CD8-positive, alpha-beta T cell (primary cell): ENCODE measurements at regions of chr11 and their contacts with region 1.

Region 1: GRCh38 chr11:73597956-73598718 is at the start of gene FAM168A:
- DNase-seq: peak; percentile 85 to 98 (median 93)
- ATAC-seq: peak; percentile 87
- H3K4me3 ChIP-seq: peak within 1 kb of the TSS; percentile 81 to 99
- H3K4me3 Mint-ChIP-seq: peak within 1 kb of the TSS; percentile 90
- H3K27ac ChIP-seq: peak within 1 kb of the TSS; percentile 76 to 83
- H3K27ac Mint-ChIP-seq: peak within 1 kb of the TSS; percentile 90
- H3K4me1 ChIP-seq: peaks cover 20% of the 10 kb centered on the region
- H3K4me1 Mint-ChIP-seq: peaks cover 46% of the 10 kb centered on the region
- H3K27me3 ChIP-seq: no peaks in the 10 kb centered on the region
- H3K27me3 Mint-ChIP-seq: no peaks in the 10 kb centered on the region
- CTCF ChIP-seq: no peak
- total RNA-seq, gene FAM168A: 18.4 to 18.8 TPM

Region 2: GRCh38 chr11:73141848-73142286 is 456.3 kb before region 1 on chr11:
- CTCF ChIA-PET with region 1: no interaction called
- POLR2A ChIA-PET with region 1: no interaction called
- intact Hi-C with region 1: loop called (anchors 2 to 10 kb)
- DNase-seq: peak in 7 of 9 experiments; percentile 23 to 81 (median 66)
- ATAC-seq: peak; percentile 27
- H3K4me3 ChIP-seq: peak overlapping the region; percentile 97 to 99
- H3K4me3 Mint-ChIP-seq: peak overlapping the region; percentile 98
- H3K27ac ChIP-seq: peak overlapping the region; percentile 83 to 87
- H3K27ac Mint-ChIP-seq: peak overlapping the region; percentile 96
- H3K4me1 ChIP-seq: peaks cover 33% of the 10 kb centered on the region
- H3K4me1 Mint-ChIP-seq: peaks cover 52% of the 10 kb centered on the region
- H3K27me3 ChIP-seq: no peaks in the 10 kb centered on the region
- H3K27me3 Mint-ChIP-seq: no peaks in the 10 kb centered on the region
- CTCF ChIP-seq: no peak

Region 3: GRCh38 chr11:73647459-73648100 is 49.4 kb after region 1 on chr11:
- CTCF ChIA-PET with region 1: no interaction called
- POLR2A ChIA-PET with region 1: interaction called, 7 read pairs
- intact Hi-C with region 1: loop called (anchors 1 kb)
- DNase-seq: peak; percentile 89 to 97 (median 94)
- ATAC-seq: peak; percentile 99
- H3K4me3 ChIP-seq: peak overlapping the region; percentile 55 to 79
- H3K4me3 Mint-ChIP-seq: peak overlapping the region; percentile 90
- H3K27ac ChIP-seq: peak overlapping the region; percentile 42 to 58
- H3K27ac Mint-ChIP-seq: peak overlapping the region; percentile 94
- H3K4me1 ChIP-seq: peaks cover 19% of the 10 kb centered on the region
- H3K4me1 Mint-ChIP-seq: peaks cover 24% of the 10 kb centered on the region
- H3K27me3 ChIP-seq: peaks cover 0 to 4% of the 10 kb centered on the region in 2 experiments
- H3K27me3 Mint-ChIP-seq: no peaks in the 10 kb centered on the region
- CTCF ChIP-seq: no peak

Region 4: GRCh38 chr11:73787643-73788537 is 189.8 kb after region 1 on chr11 and contains the start of gene MRPL48:
- CTCF ChIA-PET with region 1: no interaction called
- POLR2A ChIA-PET with region 1: no interaction called
- intact Hi-C with region 1: loop called (anchors 1 to 2 kb)
- DNase-seq: peak; percentile 75 to 93 (median 88)
- ATAC-seq: peak; percentile 100
- H3K4me3 ChIP-seq: peak within 1 kb of the TSS; percentile 87 to 89
- H3K4me3 Mint-ChIP-seq: peak within 1 kb of the TSS; percentile 100
- H3K27ac ChIP-seq: peak within 1 kb of the TSS; percentile 77 to 82
- H3K27ac Mint-ChIP-seq: peak within 1 kb of the TSS; percentile 99
- H3K4me1 ChIP-seq: peaks cover 4% of the 10 kb centered on the region
- H3K4me1 Mint-ChIP-seq: peaks cover 33% of the 10 kb centered on the region
- H3K27me3 ChIP-seq: no peaks in the 10 kb centered on the region
- H3K27me3 Mint-ChIP-seq: no peaks in the 10 kb centered on the region
- CTCF ChIP-seq: no peak
- total RNA-seq, gene MRPL48: 10.2 to 13.7 TPM

Region 5: GRCh38 chr11:74398244-74399159 is 800.4 kb after region 1 on chr11 and contains the start of gene PGM2L1:
- CTCF ChIA-PET with region 1: no interaction called
- POLR2A ChIA-PET with region 1: no interaction called
- intact Hi-C with region 1: loop called in 1 of 2 experiments (anchors 10 kb)
- DNase-seq: peak; percentile 85 to 97 (median 95)
- ATAC-seq: peak; percentile 86
- H3K4me3 ChIP-seq: peak within 1 kb of the TSS; percentile 51 to 92
- H3K4me3 Mint-ChIP-seq: peak within 1 kb of the TSS; percentile 99
- H3K27ac ChIP-seq: peak within 1 kb of the TSS; percentile 44 to 58
- H3K27ac Mint-ChIP-seq: peak within 1 kb of the TSS; percentile 96
- H3K4me1 ChIP-seq: peaks cover 10% of the 10 kb centered on the region
- H3K4me1 Mint-ChIP-seq: peaks cover 26% of the 10 kb centered on the region
- H3K27me3 ChIP-seq: no peaks in the 10 kb centered on the region
- H3K27me3 Mint-ChIP-seq: no peaks in the 10 kb centered on the region
- CTCF ChIP-seq: no peak
- total RNA-seq, gene PGM2L1: 5.2 to 5.8 TPM